MCF 10A (cell line): ENCODE measurements at regions of chr1 and their contacts with region 1.

Region 1: GRCh38 chr1:176880954-176881595 is 283.4 kb downstream of the ASTN1 start:
- DNase-seq: peak; percentile 90
- H3K4me3 Mint-ChIP-seq: no peak overlapping the region
- H3K27ac Mint-ChIP-seq: no peak overlapping the region
- H3K4me1 Mint-ChIP-seq: no peaks in the 10 kb centered on the region
- H3K27me3 Mint-ChIP-seq: peaks cover 12% of the 10 kb centered on the region
- CTCF ChIP-seq: peak; percentile 95

Region 2: DNA sequence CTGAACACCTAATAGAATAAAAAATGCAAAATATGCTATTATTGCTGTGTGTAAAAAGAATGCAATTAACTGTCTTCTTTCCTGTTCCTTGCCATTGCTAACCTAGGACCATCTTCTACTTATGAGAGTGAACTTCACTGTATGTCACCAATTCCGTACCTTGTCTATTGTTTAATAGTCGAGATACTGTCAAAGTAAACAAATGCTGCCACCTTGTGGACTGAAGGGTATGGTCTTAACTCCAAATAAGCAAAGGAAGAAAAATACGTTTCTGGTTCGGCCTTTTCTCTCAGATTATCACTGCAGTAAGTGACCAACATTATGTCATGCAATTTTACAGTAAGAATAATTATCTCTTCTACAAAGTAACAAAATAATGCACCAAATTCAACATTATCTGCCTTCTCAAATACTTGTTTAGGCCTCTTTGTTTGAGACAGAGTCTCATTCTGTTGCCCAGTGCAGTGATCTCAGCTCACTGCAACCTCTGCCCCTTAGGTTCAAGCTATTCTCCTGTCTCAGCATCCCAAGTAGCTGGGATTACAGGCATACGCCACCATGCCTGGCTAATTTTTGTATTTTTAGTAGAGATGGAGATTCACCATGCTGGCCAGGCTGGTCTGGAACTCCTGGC is 807.4 kb before region 1 on chr1:
- CTCF ChIA-PET with region 1: no interaction called
- POLR2A ChIA-PET with region 1: no interaction called
- intact Hi-C with region 1: loop called (anchors 5 kb)
- DNase-seq: peak; percentile 85
- H3K4me3 Mint-ChIP-seq: no peak overlapping the region
- H3K27ac Mint-ChIP-seq: no peak overlapping the region
- H3K4me1 Mint-ChIP-seq: peaks cover 6% of the 10 kb centered on the region
- H3K27me3 Mint-ChIP-seq: no peaks in the 10 kb centered on the region
- CTCF ChIP-seq: peak; percentile 74

Region 3: GRCh38 chr1:176374967-176375569 is 506.0 kb before region 1 on chr1:
- CTCF ChIA-PET with region 1: interaction called, 82 read pairs
- POLR2A ChIA-PET with region 1: no interaction called
- intact Hi-C with region 1: loop called (anchors 1 kb)
- DNase-seq: peak; percentile 90
- H3K4me3 Mint-ChIP-seq: no peak overlapping the region
- H3K27ac Mint-ChIP-seq: no peak overlapping the region
- H3K4me1 Mint-ChIP-seq: no peaks in the 10 kb centered on the region
- H3K27me3 Mint-ChIP-seq: no peaks in the 10 kb centered on the region
- CTCF ChIP-seq: peak; percentile 93

Region 4: GRCh38 chr1:176691251-176692228 is 189.5 kb before region 1 on chr1:
- CTCF ChIA-PET with region 1: interaction called, 11 read pairs
- POLR2A ChIA-PET with region 1: interaction called, 3 read pairs
- intact Hi-C with region 1: loop called (anchors 1 kb)
- DNase-seq: peak; percentile 81
- H3K4me3 Mint-ChIP-seq: no peak overlapping the region
- H3K27ac Mint-ChIP-seq: no peak overlapping the region
- H3K4me1 Mint-ChIP-seq: peaks cover 7% of the 10 kb centered on the region
- H3K27me3 Mint-ChIP-seq: no peaks in the 10 kb centered on the region
- CTCF ChIP-seq: peak; percentile 89

Region 5: DNA sequence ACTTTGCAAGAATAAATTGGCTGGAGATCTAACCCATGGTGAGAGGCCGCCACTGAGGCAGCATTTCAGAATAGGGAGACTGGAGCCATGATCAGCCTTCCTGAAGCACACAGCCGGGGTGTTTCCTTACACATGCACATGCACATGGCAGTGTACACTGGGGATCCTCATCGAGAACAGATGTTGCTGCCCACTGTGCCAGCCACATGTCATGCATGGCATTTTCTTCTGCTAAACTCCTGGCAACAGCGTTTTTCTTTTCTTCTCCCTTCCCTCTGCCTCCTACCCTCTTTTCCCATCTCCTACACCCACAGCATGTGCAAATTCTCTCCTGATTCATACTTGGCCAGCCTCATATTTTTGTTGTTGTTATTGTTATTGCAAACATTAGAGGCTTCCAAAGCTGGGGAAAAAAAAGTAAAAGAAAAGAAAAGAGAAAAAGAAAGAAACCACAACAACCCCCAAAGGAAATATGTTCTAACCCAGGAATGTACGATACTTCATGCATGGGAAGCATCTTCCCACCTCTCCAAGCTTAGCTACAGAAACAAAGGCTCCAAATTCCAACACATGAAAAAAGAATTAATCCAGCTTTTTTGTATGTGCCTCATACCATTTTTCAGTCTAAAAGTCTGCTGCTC is 60.6 kb before region 1 on chr1:
- CTCF ChIA-PET with region 1: no interaction called
- POLR2A ChIA-PET with region 1: no interaction called
- intact Hi-C with region 1: no loop called
- DNase-seq: no peak
- H3K4me3 Mint-ChIP-seq: no peak overlapping the region
- H3K27ac Mint-ChIP-seq: no peak overlapping the region
- H3K4me1 Mint-ChIP-seq: no peaks in the 10 kb centered on the region
- H3K27me3 Mint-ChIP-seq: no peaks in the 10 kb centered on the region
- CTCF ChIP-seq: no peak

Region 6: GRCh38 chr1:176850871-176851270 is 30.2 kb before region 1 on chr1:
- CTCF ChIA-PET with region 1: interaction called, 16 read pairs
- POLR2A ChIA-PET with region 1: no interaction called
- intact Hi-C with region 1: no loop called
- DNase-seq: no peak
- H3K4me3 Mint-ChIP-seq: no peak overlapping the region
- H3K27ac Mint-ChIP-seq: no peak overlapping the region
- H3K4me1 Mint-ChIP-seq: no peaks in the 10 kb centered on the region
- H3K27me3 Mint-ChIP-seq: no peaks in the 10 kb centered on the region
- CTCF ChIP-seq: no peak